ENCODE measurements at regions of chr3 and their contacts with region 1.

Region 1: GRCh38 chr3:157499342-157499963 is 3.8 kb downstream of the VEPH1 start:
- DNase-seq: peak; percentile 93 to 96
- H3K4me3 ChIP-seq: peak overlapping the region; percentile 50
- H3K27ac ChIP-seq: peak overlapping the region; percentile 84
- H3K4me1 ChIP-seq: peaks cover 30% of the 10 kb centered on the region
- H3K27me3 ChIP-seq: no peaks in the 10 kb centered on the region
- CTCF ChIP-seq: peak; percentile 43

Region 2: GRCh38 chr3:155870133-155870944 is 1629.1 kb before region 1 on chr3 and contains the start of gene GMPS:
- CTCF ChIA-PET with region 1: no interaction called
- POLR2A ChIA-PET with region 1: interaction called, 4 read pairs
- intact Hi-C with region 1: loop called (anchors 5 kb)
- DNase-seq: peak; percentile 84 to 99
- H3K4me3 ChIP-seq: peak within 1 kb of the TSS; percentile 91
- H3K27ac ChIP-seq: peak within 1 kb of the TSS; percentile 79
- H3K4me1 ChIP-seq: peaks cover 21% of the 10 kb centered on the region
- H3K27me3 ChIP-seq: no peaks in the 10 kb centered on the region
- CTCF ChIP-seq: peak; percentile 58
- total RNA-seq, gene GMPS: 116 and 139 TPM in 2 replicates

Region 3: DNA sequence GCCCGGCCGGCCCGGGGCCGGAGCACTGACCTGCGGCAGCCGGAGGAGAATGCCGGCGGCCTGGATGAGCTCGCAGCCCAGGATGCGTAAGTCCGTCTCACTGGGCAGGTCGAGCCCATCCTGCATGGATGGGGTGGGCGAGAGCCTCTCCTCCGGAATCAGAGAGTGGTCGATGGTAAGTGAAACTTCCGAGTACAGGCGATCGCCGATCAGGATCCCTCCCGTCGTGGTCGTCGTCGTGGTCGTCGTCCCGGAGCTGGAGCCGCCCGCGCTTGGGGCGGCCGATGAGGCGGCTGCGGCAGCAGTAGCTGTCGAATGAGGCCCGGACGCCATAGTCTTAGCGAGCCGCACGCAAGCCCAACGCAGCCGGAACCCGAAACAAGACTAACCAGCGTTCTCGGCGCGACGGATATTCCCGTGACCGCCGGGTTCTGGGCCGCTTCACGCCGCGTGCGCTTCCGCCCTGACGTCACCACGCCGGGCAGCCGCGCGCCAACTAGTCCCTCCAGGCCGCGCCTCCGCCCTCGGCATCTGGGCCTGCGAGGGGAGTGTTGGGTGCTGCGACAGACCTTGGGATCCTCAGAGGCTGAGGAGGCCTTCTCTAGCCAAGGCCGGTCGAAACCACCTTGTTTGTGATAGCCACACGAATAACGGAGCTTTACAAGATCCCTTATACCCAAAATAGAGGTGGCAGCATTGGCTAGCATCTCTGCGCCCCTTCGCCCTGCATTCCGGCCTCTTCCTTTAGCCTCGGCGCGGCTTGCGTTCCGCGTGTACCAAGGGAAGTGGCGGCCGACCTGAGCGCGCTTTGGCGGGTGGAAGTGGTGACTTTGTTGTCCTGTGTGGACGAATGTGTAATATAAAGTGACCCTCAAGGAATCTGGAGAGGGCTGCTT is 339.4 kb before region 1 on chr3 and contains the start of gene CCNL1:
- CTCF ChIA-PET with region 1: interaction called, 3 read pairs
- POLR2A ChIA-PET with region 1: interaction called, 3 read pairs
- intact Hi-C with region 1: loop called (anchors 1 kb)
- DNase-seq: peak; percentile 92 to 97
- H3K4me3 ChIP-seq: peak within 1 kb of the TSS; percentile 93
- H3K27ac ChIP-seq: peak within 1 kb of the TSS; percentile 100
- H3K4me1 ChIP-seq: peaks cover 50% of the 10 kb centered on the region
- H3K27me3 ChIP-seq: no peaks in the 10 kb centered on the region
- CTCF ChIP-seq: no peak
- total RNA-seq, gene CCNL1: 91.3 and 101 TPM in 2 replicates

Region 4: DNA sequence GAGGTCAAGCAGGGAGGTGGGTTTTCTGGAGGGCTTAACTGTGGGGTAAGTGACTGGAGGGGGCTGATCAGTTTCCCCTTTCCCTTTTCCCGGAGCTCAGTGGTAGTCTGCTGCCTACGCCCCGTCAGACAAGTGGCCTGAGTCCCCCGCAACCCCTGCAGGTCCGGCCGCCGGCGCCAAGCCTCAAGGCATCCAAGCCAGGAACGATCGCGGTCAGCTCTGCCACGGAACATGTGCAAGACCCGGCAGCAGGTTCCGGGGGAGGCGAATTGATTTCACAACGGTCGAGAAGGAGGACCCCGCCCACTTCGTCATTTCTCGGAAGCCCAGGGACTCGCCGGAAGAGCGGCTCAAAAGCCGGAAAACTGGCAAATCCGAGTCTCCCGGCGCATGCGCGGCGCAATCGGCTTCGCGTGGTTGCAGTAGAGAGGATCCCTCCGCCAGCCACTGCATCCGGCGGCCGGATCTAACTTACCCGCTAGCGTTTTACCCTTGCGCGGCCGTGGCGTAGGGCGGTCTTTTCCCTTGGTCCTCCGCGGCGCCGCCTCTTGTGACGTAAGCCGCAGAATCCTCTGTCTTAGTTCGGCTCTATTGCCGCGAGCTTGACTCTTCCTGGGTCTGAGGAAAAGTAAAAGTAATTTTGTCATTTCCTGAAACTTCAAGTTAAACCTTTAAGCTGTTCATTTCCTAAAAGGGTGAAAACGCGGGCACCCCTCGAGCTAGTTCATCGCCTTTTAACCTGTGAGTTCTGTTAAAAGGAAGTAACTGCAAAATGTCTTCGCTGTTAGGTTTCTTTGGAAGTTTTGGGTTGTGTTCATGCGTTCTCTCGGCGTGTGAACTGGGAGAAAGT is 324.6 kb before region 1 on chr3:
- CTCF ChIA-PET with region 1: no interaction called
- POLR2A ChIA-PET with region 1: interaction called, 8 read pairs
- intact Hi-C with region 1: loop called (anchors 1 kb)
- DNase-seq: peak; percentile 99
- H3K4me3 ChIP-seq: peak overlapping the region; percentile 71
- H3K27ac ChIP-seq: peak overlapping the region; percentile 94
- H3K4me1 ChIP-seq: peaks cover 22% of the 10 kb centered on the region
- H3K27me3 ChIP-seq: no peaks in the 10 kb centered on the region
- CTCF ChIP-seq: no peak

Region 5: GRCh38 chr3:157453824-157454223 is 45.6 kb before region 1 on chr3:
- CTCF ChIA-PET with region 1: no interaction called
- POLR2A ChIA-PET with region 1: interaction called, 22 read pairs
- intact Hi-C with region 1: no loop called
- DNase-seq: no peak
- H3K4me3 ChIP-seq: no peak overlapping the region
- H3K27ac ChIP-seq: no peak overlapping the region
- H3K4me1 ChIP-seq: no peaks in the 10 kb centered on the region
- H3K27me3 ChIP-seq: no peaks in the 10 kb centered on the region
- CTCF ChIP-seq: no peak

Region 6: DNA sequence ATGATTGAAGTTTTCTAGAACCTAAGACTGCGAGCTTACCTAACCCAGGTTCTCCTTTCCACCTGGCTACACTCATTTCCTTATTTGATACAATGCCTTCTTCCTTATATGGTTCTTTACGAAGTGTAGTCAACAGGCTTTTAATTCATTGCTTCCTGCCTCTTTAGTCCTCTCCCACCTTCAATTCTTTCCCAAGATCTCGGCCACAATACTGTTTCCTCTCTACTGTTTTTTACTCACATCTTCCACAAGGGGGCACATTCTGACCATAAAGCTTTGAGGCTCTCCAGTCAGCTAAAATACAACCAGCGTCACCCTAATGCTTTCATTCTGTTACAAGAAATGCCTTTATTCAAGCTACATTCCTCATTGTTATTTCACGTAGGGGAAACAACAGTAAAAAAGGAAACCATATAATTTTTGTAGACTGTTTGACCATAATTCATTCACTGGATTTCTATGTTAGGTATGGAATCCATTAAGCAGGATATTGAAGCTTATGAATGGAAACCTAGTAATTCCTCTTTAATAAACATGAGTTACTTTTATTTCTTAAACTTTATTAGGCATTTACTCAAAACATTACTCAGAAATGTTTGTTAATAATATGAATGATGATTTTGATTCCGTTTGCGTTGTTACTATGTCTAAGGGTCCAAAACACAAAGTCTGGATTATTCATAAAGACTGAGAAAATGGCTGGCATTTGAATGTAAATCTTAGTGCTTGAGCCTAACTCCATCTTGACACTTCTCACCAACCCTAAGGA is 33.3 kb after region 1 on chr3:
- CTCF ChIA-PET with region 1: interaction called, 3 read pairs
- POLR2A ChIA-PET with region 1: no interaction called
- intact Hi-C with region 1: loop called (anchors 2 kb)
- DNase-seq: peak; percentile 37 to 80
- H3K4me3 ChIP-seq: no peak overlapping the region
- H3K27ac ChIP-seq: no peak overlapping the region
- H3K4me1 ChIP-seq: peaks cover 6% of the 10 kb centered on the region
- H3K27me3 ChIP-seq: no peaks in the 10 kb centered on the region
- CTCF ChIP-seq: peak; percentile 95

Region 7: DNA sequence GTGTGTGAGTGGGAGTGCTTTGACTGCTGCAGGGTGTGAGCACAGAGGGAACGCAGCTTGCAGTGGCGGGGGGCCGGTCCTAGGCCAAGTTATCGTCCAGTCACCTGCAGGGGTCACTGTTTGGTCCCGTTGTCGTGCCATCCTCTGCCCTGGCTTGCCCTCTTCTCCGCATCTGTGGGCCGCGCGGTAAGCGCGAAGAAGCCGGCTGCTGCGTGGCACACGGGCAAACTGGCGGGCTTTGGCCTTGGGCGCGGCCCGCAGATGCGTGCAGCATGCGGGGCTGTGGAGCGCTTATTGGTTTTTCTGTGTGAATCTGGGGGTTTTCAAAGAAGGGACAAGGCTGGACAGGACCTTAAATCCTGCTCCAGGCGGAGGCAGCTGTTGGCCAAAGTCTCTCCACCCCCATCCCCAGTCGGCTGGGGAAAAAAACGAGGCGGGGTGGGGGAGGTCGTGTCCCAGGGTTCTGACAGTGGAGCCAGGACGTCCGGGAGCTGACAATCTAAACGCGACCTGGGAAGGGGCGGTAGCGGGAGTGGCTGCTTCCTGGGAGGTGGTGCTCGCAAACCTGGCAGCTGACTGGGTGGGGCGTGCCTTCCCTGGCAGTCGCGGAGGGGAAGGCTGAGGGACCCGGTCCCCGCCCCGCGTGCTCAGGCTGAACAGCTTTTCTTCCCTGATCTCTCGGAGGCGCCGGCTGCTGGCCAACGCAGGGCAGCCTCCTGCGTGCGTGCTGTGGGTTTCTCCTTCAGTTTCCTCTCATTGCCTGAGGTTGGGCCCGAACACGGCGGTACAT is 43.5 kb after region 1 on chr3:
- CTCF ChIA-PET with region 1: no interaction called
- POLR2A ChIA-PET with region 1: no interaction called
- intact Hi-C with region 1: no loop called
- DNase-seq: peak; percentile 67 to 82
- H3K4me3 ChIP-seq: peak overlapping the region; percentile 60
- H3K27ac ChIP-seq: no peak overlapping the region
- H3K4me1 ChIP-seq: no peaks in the 10 kb centered on the region
- H3K27me3 ChIP-seq: no peaks in the 10 kb centered on the region
- CTCF ChIP-seq: peak; percentile 48; the same call in 1 of the 2 replicates

Region 8: DNA sequence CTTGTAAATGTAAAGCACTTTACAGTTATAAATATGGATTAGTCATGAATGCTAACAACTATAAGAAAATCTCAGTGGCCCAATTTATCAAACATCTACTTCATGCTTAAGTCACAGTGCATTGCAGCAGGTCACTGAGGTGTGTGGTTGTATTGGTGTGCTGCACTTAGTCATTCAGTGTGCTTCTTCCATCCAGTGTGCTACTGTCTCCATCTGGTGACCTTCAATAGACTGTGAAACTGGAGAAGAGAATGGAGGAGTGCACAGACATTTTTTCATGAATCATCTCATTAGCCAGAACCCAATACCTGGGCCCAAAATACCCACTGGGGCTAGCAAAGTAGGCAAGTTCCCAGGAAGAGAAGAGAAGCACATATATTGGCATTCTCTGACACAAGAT is 407.2 kb after region 1 on chr3:
- CTCF ChIA-PET with region 1: no interaction called
- POLR2A ChIA-PET with region 1: no interaction called
- intact Hi-C with region 1: no loop called
- DNase-seq: no peak
- H3K4me3 ChIP-seq: no peak overlapping the region
- H3K27ac ChIP-seq: no peak overlapping the region
- H3K4me1 ChIP-seq: no peaks in the 10 kb centered on the region
- H3K27me3 ChIP-seq: no peaks in the 10 kb centered on the region
- CTCF ChIP-seq: no peak

Measured in PC-9 (cell line).